ENCODE measurements at regions of chr12 and their contacts with region 1.

Region 1: DNA sequence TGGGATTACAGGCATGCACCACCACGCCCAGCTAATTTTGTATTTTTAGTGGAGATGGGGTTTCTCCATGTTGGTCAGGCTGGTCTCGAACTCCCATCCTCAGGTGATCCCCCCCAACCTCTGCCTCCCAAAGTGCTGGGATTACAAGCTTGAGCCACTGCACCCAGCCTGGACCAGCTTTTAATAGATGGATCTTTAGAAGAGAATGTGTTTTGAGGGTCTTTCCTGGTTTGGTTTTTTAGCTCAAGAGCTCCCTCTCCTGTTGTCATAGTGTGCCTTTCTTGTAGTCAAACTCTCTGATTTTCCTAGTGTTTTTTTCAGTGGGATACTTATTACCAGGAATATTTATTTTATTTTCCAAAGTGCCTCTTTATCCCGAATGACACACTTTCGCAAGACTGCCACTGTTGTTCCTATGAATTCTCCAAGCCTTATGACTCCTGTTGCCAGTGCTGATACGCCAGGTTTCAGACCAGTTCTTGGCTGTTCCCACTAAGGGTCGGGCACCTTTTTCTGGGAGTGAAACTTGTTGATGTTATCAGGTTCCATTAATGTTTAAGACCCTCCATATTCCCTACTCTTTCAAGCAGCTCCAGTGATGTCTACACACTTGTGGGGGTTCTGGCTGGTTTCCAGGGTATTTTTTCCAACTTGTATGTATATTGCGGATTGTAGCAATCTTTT is 31.5 kb upstream of the LIMA1 start:
- DNase-seq: peak; percentile 40 to 77
- H3K4me3 ChIP-seq: no peak overlapping the region
- H3K4me1 ChIP-seq: peaks cover 6% of the 10 kb centered on the region
- H3K27me3 ChIP-seq: no peaks in the 10 kb centered on the region

Region 2: GRCh38 chr12:50132505-50133135 is 182.2 kb before region 1 on chr12:
- in situ Hi-C with region 1: loop called (anchors 5 kb)
- DNase-seq: peak in 1 of 2 experiments; percentile 47
- H3K4me3 ChIP-seq: no peak overlapping the region
- H3K4me1 ChIP-seq: no peaks in the 10 kb centered on the region
- H3K27me3 ChIP-seq: no peaks in the 10 kb centered on the region

Region 3: DNA sequence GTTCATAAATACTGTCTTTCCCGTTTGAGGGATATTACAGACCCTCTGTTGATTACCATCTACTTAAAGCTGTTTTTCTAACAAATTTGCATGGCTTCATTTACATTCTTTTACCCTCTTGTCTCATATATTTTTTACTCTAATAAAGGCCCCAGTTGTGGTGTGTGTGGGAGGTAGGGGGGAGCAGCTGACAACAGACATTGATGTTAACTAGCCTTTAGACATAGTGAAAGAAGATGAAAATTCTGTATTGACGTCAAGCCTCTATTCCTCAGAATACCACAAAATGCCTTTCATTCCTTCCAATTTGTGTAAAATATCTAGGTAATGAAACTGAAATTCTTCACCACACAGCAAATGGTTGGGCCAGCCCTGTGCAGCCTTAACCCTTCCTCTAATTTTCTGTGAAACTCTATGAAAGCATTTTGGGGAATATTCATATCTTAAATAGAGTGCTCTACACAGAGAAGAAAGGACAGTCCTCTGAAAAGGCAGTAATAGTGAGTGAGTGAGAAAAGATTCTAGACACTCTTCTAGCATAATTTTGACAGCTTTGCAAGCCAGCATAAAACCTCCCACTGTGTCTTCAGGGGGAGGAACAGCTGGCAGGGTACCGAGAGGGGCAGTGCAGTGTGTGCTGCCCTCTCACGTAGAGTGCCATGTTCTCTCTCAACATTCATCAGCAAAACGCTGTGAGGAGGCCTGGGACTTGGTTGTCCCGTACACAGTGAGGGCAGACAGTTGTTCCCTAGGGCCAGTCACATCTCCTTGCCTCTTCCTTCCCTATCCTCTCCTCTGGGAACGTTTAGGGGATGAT is 127.5 kb before region 1 on chr12:
- in situ Hi-C with region 1: loop called (anchors 10 kb)
- DNase-seq: peak; percentile 37 to 40
- H3K4me3 ChIP-seq: no peak overlapping the region
- H3K4me1 ChIP-seq: peaks cover 43% of the 10 kb centered on the region
- H3K27me3 ChIP-seq: no peaks in the 10 kb centered on the region

Region 4: GRCh38 chr12:50569321-50569720 is 254.6 kb after region 1 on chr12:
- in situ Hi-C with region 1: no loop called
- DNase-seq: no peak
- H3K4me3 ChIP-seq: no peak overlapping the region
- H3K4me1 ChIP-seq: peaks cover 25% of the 10 kb centered on the region
- H3K27me3 ChIP-seq: no peaks in the 10 kb centered on the region